ENCODE measurements at regions of chr21 and their contacts with region 1.

Region 1: DNA sequence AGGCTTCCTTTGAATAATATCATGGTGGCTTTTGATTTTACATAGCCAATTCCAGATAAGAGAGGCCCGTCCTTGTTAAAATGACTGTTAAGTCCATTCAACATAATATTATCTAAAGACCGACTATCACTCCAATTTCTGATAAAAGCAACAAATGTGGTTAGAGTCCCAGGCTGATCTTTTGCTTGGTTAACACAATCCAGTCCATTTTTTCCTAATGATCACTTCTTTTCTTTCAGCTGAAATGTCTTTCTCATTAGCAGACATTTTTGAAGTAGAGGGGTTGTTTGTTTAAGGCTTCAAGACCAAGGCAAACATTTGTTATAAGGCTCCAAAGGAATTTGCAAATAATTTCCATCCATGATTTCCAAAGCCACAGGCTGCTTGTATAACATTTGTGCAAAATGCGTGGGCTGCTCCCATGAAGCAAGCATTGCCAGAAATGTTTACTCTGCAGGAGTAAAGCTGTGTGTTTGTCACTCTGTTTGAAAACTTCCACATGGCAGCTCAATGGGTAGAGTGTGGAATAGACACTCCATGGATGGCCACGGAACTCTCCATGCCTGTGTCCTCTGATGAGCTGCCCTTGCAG is 111.5 kb downstream of the PSMG1 start:
- DNase-seq: no peak
- ATAC-seq: no peak
- H3K4me3 ChIP-seq: no peak overlapping the region
- H3K27ac ChIP-seq: no peak overlapping the region
- H3K4me1 ChIP-seq: peaks cover 3% of the 10 kb centered on the region
- H3K27me3 ChIP-seq: no peaks in the 10 kb centered on the region
- CTCF ChIP-seq: no peak

Region 2: DNA sequence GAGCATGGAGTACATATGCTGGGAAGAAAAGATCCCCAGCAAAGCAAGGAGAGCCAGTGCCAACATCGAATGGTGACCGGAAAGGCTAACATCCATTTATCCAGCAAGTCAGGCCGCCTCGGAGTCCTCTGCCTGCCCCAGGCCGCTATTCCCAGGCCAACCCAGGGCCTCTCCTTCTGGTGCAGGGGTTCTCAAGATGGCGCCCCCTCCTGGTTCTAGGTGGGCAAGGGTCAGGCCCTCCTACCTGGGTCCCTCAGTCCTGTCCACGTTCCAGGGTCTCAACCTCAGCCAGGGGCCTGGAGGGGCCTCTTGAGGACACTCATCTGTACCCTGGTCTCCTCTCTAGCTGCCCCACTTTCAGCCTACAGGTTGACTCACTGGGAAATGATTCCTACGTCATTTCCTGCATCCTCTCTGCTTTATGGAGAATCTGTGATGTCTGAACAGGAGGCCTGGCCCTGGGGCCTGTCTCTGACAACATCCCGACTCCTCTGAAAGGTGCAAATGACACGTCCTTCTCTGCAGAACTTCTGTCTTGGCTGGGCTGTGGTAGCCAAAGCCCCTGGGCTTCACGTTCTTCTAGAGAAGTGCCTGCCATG is 33.8 kb before region 1 on chr21:
- intact Hi-C with region 1: loop called in 1 of 2 experiments (anchors 5 kb)
- DNase-seq: no peak
- ATAC-seq: no peak
- H3K4me3 ChIP-seq: no peak overlapping the region
- H3K27ac ChIP-seq: no peak overlapping the region
- H3K4me1 ChIP-seq: peaks cover 24% of the 10 kb centered on the region
- H3K27me3 ChIP-seq: no peaks in the 10 kb centered on the region
- CTCF ChIP-seq: no peak

Measured in psoas muscle (tissue), 8 donors.